Ascending aorta (tissue), 2 donors: ENCODE measurements at regions of chr7 and their contacts with region 1.

Region 1: DNA sequence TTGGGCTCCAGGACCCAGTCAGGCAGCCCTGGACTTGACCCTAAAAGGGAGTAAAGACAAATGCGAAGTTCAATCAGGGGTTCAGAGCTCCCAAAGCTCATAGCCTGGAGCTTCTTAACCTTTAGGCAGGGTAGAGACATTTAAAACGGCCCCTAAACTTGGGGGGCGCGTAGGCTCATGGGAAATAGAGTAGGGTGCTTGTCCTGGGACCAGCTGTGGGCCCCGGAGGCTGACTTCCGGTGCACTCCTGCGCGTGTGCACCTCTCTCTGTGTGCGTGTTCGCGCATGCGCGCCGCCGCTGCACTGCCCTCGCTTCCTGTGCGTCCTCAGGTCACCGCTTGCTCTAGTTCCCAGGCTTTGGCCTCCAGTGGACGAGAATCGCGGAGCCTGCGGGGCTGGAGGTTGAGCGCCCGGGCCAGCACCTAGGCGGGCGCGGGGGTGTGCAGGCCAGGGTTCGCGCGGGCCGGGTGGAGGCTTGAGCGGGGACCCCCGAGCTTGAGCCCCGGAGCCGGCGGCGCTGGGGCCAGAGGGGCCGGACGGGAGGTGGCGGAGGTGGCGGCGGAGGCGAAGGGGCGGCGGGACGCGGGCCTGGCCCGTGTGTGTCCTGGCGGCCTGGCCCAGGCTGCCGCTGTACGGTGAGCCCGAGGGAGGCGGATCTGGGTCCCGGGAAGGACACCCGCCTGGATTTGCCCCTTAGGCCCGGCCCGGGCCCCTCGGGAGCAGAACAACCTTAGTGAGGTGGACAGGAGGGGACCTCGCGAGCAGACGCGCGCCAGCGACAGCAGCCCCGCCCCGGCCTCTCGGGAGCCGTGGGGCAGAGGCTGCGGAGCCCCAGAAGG is at the start of gene RBAK:
- DNase-seq: peak; percentile 78 to 96
- H3K4me3 ChIP-seq: peak within 1 kb of the TSS; percentile 94
- H3K27ac ChIP-seq: peak within 1 kb of the TSS; percentile 64 to 80
- H3K4me1 ChIP-seq: peaks cover 0 to 5% of the 10 kb centered on the region in 2 donors
- H3K27me3 ChIP-seq: no peaks in the 10 kb centered on the region
- CTCF ChIP-seq: no peak
- total RNA-seq, gene RBAK: 9.9 TPM

Region 2: GRCh38 chr7:4973728-4974198 is 72.0 kb before region 1 on chr7:
- intact Hi-C with region 1: loop called (anchors 5 kb)
- DNase-seq: peak; percentile 39 to 92
- H3K4me3 ChIP-seq: peak overlapping the region; percentile 67 to 96
- H3K27ac ChIP-seq: peak overlapping the region; percentile 83 to 96
- H3K4me1 ChIP-seq: no peaks in the 10 kb centered on the region
- H3K27me3 ChIP-seq: no peaks in the 10 kb centered on the region
- CTCF ChIP-seq: peak; percentile 66 to 86 (median 78)